ENCODE measurements at regions of chr4 and their contacts with region 1.

Region 1: GRCh38 chr4:48085821-48086607 is 48.0 kb downstream of the TXK start:
- DNase-seq: no peak
- ATAC-seq: peak; percentile 49
- H3K4me3 Mint-ChIP-seq: no peak overlapping the region
- H3K27ac Mint-ChIP-seq: no peak overlapping the region
- H3K4me1 Mint-ChIP-seq: peaks cover 14% of the 10 kb centered on the region
- H3K27me3 Mint-ChIP-seq: no peaks in the 10 kb centered on the region

Region 2: DNA sequence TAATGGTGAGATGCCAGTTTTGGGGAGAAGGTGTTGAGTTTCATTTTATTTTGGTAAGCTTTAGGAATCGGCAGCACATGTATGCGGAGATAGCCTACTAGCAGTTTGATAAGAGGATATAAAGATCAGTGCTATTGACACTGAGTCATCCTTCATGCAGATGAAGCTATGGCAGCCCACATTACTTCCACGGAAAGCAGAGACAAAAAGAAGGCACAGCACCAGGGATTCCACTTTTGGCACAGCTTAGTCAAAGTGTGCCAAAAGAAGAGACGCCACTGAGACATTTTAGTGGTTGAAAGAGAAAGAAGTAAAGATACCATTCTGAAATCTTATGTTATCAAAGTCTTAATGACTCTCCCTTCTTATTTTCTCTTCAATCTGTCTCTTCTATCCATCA is 950.8 kb before region 1 on chr4:
- CTCF ChIA-PET with region 1: no interaction called
- POLR2A ChIA-PET with region 1: no interaction called
- intact Hi-C with region 1: no loop called
- DNase-seq: no peak
- ATAC-seq: no peak
- H3K4me3 Mint-ChIP-seq: no peak overlapping the region
- H3K27ac Mint-ChIP-seq: no peak overlapping the region
- H3K4me1 Mint-ChIP-seq: no peaks in the 10 kb centered on the region
- H3K27me3 Mint-ChIP-seq: peaks cover 11% of the 10 kb centered on the region

Region 3: GRCh38 chr4:47686294-47686872 is 399.6 kb before region 1 on chr4:
- CTCF ChIA-PET with region 1: no interaction called
- POLR2A ChIA-PET with region 1: no interaction called
- intact Hi-C with region 1: loop called (anchors 1 to 5 kb)
- DNase-seq: peak; percentile 84
- ATAC-seq: peak; percentile 97
- H3K4me3 Mint-ChIP-seq: no peak overlapping the region
- H3K27ac Mint-ChIP-seq: no peak overlapping the region
- H3K4me1 Mint-ChIP-seq: peaks cover 2% of the 10 kb centered on the region
- H3K27me3 Mint-ChIP-seq: peaks cover 7% of the 10 kb centered on the region

Region 4: GRCh38 chr4:47933840-47934239 is 152.2 kb before region 1 on chr4:
- CTCF ChIA-PET with region 1: interaction called, 5 read pairs
- POLR2A ChIA-PET with region 1: no interaction called
- intact Hi-C with region 1: loop called in 1 of 2 experiments (anchors 5 kb)
- DNase-seq: no peak
- ATAC-seq: peak; percentile 49
- H3K4me3 Mint-ChIP-seq: no peak overlapping the region
- H3K27ac Mint-ChIP-seq: no peak overlapping the region
- H3K4me1 Mint-ChIP-seq: no peaks in the 10 kb centered on the region
- H3K27me3 Mint-ChIP-seq: peaks cover 1% of the 10 kb centered on the region

Region 5: GRCh38 chr4:48008021-48008596 is 77.9 kb before region 1 on chr4:
- CTCF ChIA-PET with region 1: interaction called, 74 read pairs
- POLR2A ChIA-PET with region 1: no interaction called
- intact Hi-C with region 1: loop called (anchors 1 kb)
- DNase-seq: no peak
- ATAC-seq: no peak
- H3K4me3 Mint-ChIP-seq: no peak overlapping the region
- H3K27ac Mint-ChIP-seq: no peak overlapping the region
- H3K4me1 Mint-ChIP-seq: no peaks in the 10 kb centered on the region
- H3K27me3 Mint-ChIP-seq: peaks cover 3% of the 10 kb centered on the region

Region 6: DNA sequence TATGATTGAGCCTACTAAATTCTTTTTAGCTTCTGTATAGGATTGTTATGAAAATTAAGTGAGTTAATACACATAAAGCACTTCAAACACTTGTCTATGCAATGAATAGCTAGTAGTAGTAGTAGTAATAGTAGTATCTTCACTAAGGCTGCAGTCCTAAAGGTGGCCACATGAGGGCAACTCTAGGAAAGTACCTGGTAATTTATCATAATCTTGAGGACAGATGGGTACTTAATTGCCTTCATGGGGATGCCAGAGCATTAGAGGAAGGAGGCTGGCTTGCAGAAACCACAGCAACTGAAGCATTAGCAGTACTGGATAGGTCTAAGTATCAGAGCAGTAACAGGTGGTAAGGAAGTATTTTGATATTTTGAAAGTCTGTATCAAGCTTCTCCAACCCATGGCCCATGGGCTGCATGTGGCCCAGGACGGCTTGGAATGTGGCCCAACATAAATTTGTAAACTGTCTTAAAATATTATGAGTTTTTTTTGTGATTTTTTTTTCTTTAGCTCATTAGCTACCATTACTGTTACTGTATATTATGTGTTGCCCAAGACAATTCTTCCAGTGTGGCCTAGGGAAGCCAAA is 52.1 kb before region 1 on chr4:
- CTCF ChIA-PET with region 1: interaction called, 91 read pairs
- POLR2A ChIA-PET with region 1: no interaction called
- intact Hi-C with region 1: loop called (anchors 1 to 2 kb)
- DNase-seq: peak; percentile 78
- ATAC-seq: peak; percentile 37
- H3K4me3 Mint-ChIP-seq: no peak overlapping the region
- H3K27ac Mint-ChIP-seq: peak overlapping the region; percentile 29
- H3K4me1 Mint-ChIP-seq: peaks cover 46% of the 10 kb centered on the region
- H3K27me3 Mint-ChIP-seq: no peaks in the 10 kb centered on the region

Region 7: DNA sequence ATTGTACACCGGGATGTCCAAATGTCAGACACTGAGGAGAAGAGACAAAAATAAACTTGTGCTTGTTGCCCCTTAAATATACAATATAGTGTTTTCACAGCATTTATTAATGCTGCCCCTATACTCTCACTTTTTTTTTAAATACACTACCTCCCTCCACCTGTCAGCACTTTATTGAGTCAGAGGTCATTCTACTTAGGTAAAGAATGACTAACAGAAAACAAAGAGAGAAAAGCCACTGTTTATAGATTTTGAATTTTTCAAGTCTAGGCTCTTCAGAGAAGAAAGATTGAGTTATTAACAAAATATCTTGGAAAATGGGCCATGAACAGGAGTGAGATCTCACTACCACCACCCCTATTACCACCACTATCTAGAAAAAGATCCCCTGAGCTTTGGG is 11.4 kb before region 1 on chr4:
- CTCF ChIA-PET with region 1: interaction called, 15 read pairs
- POLR2A ChIA-PET with region 1: no interaction called
- intact Hi-C with region 1: no loop called
- DNase-seq: no peak
- ATAC-seq: no peak
- H3K4me3 Mint-ChIP-seq: no peak overlapping the region
- H3K27ac Mint-ChIP-seq: no peak overlapping the region
- H3K4me1 Mint-ChIP-seq: peaks cover 19% of the 10 kb centered on the region
- H3K27me3 Mint-ChIP-seq: no peaks in the 10 kb centered on the region

Region 8: GRCh38 chr4:48195374-48195773 is 109.4 kb after region 1 on chr4:
- CTCF ChIA-PET with region 1: no interaction called
- POLR2A ChIA-PET with region 1: no interaction called
- intact Hi-C with region 1: no loop called
- DNase-seq: no peak
- ATAC-seq: peak; percentile 51
- H3K4me3 Mint-ChIP-seq: no peak overlapping the region
- H3K27ac Mint-ChIP-seq: no peak overlapping the region
- H3K4me1 Mint-ChIP-seq: peaks cover 7% of the 10 kb centered on the region
- H3K27me3 Mint-ChIP-seq: no peaks in the 10 kb centered on the region